ENCODE measurements at regions of chr11 and their contacts with region 1.

Region 1: GRCh38 chr11:8813658-8814057 is 97.3 kb upstream of the AKIP1 start:
- DNase-seq: peak; percentile 72
- H3K27ac ChIP-seq: peak overlapping the region; percentile 85
- CTCF ChIP-seq: no peak; the same call in 1 of the 2 replicates

Region 2: DNA sequence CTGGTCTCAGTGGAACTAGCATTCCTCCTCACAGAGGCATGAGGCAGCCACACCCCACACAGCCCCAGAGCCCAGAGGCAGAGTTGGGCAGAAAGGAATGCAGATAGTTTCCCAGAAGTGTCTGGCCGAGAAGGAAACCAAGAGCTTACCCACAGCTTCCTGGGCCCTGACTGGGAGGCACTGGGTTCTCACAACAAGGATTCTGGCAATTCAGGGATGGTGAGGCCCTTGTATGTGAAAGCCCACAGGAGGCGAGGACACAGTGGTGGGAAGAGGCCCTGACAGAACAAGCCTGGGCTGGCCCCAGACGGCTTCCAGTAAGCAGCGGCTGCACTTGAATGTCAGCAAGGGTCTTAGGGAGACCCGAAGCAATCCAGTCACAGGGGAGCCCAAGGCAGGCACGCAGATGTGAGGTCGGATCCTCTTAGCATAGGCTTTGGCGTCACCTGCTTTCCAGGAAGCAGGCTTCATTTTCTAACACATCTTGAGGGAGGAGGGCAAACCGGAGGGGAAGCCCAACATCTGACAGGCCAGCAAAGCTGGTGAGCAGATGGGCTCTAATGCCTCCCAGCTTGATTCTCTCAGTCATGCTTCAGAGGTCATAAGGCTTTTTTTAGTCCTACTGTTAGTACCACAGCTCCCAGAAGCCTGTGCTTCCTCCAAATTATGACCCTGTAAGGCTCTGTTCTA is 19.1 kb after region 1 on chr11:
- CTCF ChIA-PET with region 1: interaction called, 10 read pairs
- POLR2A ChIA-PET with region 1: no interaction called
- DNase-seq: peak; percentile 77
- H3K27ac ChIP-seq: peak overlapping the region; percentile 88
- CTCF ChIP-seq: no peak

Region 3: DNA sequence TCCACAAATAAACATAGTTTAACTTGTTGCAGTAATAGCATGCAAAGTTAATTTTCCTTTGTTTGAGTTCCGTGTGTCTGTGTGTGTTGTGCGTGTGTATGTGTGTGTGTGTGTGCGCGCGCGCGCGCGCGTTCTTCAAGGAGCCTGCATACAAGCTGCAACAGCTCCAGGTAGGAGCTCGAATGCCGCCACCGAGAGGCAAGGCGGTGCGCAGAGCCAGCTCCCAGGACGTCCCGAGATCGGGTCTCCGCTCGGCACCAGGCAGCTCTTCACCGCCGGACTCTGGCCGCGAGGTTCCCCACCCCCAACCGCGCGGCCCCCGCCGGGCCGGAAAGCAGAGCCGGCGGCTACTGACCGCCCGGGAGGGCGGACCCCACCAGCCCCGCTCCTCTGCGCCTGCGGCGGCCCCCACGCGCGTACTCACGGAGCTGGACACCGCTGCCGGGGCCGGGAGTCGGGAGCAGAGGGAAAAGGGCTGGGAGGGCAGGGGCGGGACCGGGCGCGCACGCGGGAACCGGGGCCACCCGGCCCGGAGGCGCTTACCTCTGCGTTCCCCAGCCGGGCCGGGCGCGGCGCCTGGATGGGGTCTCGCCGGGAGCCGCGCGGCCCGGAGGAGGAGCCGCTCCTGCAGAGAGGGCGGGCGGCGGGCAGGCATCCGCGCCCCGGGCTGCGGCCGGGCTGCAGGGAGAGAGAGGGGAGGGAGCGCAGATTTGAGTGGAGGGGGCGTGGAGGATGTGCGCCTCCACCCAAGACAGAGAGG is 56.9 kb after region 1 on chr11:
- CTCF ChIA-PET with region 1: interaction called, 3 read pairs
- POLR2A ChIA-PET with region 1: interaction called, 10 read pairs
- DNase-seq: peak; percentile 45
- H3K27ac ChIP-seq: peak overlapping the region; percentile 87
- CTCF ChIP-seq: 0 out of 2 replicates have a peak, but pooled peaks have one; percentile 9